ENCODE measurements at regions of chr22 and their contacts with region 1.

Region 1: GRCh38 chr22:37457093-37457893 is 28.9 kb downstream of the MFNG start:
- DNase-seq: peak; percentile 61 to 92
- H3K4me3 ChIP-seq: no peak overlapping the region
- H3K27ac ChIP-seq: no peak overlapping the region
- H3K4me1 ChIP-seq: peaks cover 27% of the 10 kb centered on the region
- H3K27me3 ChIP-seq: no peaks in the 10 kb centered on the region
- CTCF ChIP-seq: peak; percentile 100

Region 2: DNA sequence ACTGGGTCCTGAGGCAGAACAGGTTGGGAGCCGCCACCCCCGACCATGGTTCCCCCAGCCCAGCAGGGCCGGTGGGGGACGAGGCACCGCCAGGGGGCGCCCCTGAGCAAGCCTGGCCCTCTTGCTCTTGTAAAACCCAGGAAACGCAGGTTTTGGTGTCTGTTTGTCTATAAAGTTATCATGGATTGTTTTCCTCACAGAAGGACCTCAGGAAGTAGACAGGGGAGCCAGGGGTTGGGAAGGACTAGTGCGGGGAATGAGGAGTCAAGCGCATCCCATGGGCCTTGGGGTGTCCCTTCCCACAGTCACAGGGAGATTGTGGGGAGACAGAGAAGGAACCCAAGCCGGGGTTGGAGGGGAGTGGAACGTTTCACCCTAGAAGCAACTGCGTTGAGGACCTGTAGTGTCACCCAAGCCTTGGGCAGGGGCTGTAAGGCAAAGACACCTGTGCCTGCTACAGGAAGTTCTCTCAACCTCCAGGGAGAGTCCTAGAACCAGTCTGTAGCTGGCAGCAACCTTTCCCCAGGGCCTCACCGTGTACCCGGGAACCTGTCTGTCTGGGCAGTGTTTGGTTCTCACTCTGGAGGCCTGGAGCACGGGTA is 379.3 kb before region 1 on chr22:
- CTCF ChIA-PET with region 1: no interaction called
- POLR2A ChIA-PET with region 1: no interaction called
- intact Hi-C with region 1: loop called (anchors 5 kb)
- DNase-seq: peak in 1 of 2 experiments; percentile 74
- H3K4me3 ChIP-seq: no peak overlapping the region
- H3K27ac ChIP-seq: no peak overlapping the region
- H3K4me1 ChIP-seq: no peaks in the 10 kb centered on the region
- H3K27me3 ChIP-seq: peaks cover 43% of the 10 kb centered on the region
- CTCF ChIP-seq: peak; percentile 100

Region 3: DNA sequence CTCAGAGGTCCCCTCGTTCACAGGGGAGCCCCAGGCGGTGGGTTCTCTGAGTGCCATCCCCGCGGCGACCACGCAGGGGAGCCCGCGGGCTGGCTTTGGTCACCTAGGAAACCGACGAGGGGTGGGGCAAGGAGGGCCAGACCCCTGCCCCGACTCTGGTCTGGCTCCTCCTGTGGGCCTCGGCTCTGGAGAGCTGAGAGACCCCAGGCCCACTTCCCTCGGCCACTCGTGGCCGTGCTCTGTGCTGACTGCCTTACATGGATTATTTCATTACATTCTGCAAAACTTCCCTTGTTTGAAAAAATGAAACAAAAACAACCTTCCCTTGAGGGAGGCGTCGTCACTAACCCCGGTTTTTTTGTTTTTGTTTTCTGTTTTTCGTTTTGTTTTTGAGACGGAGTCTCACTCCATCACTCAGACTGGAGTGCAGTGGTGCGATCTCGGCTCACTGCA is 190.1 kb before region 1 on chr22:
- CTCF ChIA-PET with region 1: interaction called, 3 read pairs
- POLR2A ChIA-PET with region 1: no interaction called
- intact Hi-C with region 1: loop called (anchors 1 kb)
- DNase-seq: peak in 1 of 2 experiments; percentile 71
- H3K4me3 ChIP-seq: peak overlapping the region; percentile 56
- H3K27ac ChIP-seq: peak overlapping the region; percentile 42; the same call in 1 of the 2 replicates
- H3K4me1 ChIP-seq: peaks cover 13% of the 10 kb centered on the region
- H3K27me3 ChIP-seq: no peaks in the 10 kb centered on the region
- CTCF ChIP-seq: peak; percentile 96

Region 4: GRCh38 chr22:37353839-37354238 is 103.5 kb before region 1 on chr22:
- CTCF ChIA-PET with region 1: interaction called, 14 read pairs
- POLR2A ChIA-PET with region 1: no interaction called
- intact Hi-C with region 1: no loop called
- DNase-seq: peak; percentile 59 to 99
- H3K4me3 ChIP-seq: peak overlapping the region; percentile 1; the same call in 1 of the 2 replicates
- H3K27ac ChIP-seq: peak overlapping the region; percentile 90
- H3K4me1 ChIP-seq: peaks cover 57% of the 10 kb centered on the region
- H3K27me3 ChIP-seq: no peaks in the 10 kb centered on the region
- CTCF ChIP-seq: no peak

Region 5: DNA sequence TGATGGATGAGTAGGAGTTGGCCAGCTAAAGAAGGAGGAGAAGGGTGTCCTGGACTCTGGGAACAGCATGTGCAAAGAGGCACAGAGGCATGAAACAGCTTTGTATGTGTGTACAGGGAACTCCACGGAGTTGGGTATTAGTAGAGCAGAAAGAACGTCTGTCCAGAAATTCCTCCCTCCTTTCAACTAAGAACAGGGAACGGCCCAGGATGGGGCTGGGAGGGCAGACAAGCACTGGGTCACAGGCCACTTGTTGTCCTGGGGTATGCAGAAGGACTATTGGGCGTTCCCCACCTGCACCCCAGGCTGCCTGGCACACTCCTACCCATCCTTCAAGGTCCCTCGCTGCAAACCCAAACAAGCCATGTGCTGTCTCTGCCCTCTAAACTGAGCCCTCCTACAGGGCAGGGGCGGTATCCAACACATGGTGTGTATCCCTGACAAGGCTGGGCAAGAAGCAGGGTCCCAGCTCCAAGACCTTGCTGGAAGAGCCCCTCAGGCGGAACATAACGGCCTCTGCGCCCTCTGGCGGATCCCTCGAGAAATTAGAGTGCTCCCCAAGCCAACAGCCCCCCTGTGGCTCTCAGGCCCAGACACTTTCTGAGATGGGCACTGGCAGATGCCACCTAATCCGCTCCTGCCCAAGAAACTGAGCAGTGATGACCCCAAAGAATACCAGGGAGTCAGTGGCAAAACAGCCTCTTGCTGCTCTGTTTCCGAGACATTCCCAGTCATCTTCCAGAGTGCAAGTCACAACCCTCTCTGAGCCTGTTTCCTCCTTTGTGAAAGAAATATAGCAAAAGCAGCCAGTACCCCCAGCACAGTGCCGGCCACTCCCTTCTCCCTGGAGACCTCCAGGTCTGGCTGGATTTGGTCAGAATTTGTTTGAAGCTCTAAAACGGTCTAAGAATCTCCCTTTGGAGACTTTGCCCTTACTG is 28.4 kb before region 1 on chr22:
- CTCF ChIA-PET with region 1: interaction called, 3 read pairs
- POLR2A ChIA-PET with region 1: no interaction called
- intact Hi-C with region 1: loop called (anchors 1 kb)
- DNase-seq: no peak
- H3K4me3 ChIP-seq: no peak overlapping the region
- H3K27ac ChIP-seq: no peak overlapping the region
- H3K4me1 ChIP-seq: peaks cover 50% of the 10 kb centered on the region
- H3K27me3 ChIP-seq: no peaks in the 10 kb centered on the region
- CTCF ChIP-seq: peak; percentile 82

Region 6: DNA sequence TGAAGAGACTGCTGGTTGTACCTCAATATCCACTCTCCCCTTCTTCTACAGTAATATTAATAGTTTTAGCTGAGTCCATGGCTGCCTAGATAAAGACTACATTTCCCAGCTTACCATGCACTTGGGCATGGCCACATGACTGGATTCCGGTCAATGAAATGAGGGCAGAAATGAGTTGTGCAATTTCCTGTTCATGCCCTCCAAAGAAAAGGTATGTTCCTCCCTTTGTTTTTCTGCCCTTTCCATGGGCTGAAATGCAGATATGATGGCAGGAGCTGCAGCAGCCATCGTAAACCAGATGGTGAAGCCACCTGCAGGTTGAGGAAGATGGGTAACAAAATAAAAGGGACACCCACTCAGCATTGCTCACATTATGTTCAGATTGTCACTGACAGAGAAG is 14.8 kb before region 1 on chr22:
- CTCF ChIA-PET with region 1: no interaction called
- POLR2A ChIA-PET with region 1: no interaction called
- intact Hi-C with region 1: no loop called
- DNase-seq: peak in 1 of 2 experiments; percentile 76
- H3K4me3 ChIP-seq: no peak overlapping the region
- H3K27ac ChIP-seq: peak overlapping the region; percentile 77
- H3K4me1 ChIP-seq: peaks cover 24% of the 10 kb centered on the region
- H3K27me3 ChIP-seq: no peaks in the 10 kb centered on the region
- CTCF ChIP-seq: no peak

Region 7: DNA sequence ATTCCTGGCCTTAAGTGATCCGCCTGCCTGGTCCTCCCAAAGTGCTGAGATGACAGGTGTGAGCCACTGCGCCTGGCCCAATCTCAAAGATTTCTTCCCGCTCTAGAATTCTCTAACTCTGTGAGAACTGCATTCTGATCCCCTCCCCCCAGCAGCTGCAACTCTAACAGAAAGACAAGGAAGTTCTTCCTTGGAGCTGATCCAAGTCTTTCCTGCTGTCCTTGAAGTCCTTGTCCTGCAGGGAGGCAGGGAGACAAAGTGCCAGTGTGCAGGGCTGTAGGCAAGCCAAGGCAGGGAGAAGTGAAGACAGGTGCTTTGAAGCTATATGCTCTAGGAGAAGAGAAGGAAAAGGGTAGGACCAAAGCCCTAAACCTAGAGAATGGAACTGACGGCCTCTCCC is 141.9 kb after region 1 on chr22:
- CTCF ChIA-PET with region 1: no interaction called
- POLR2A ChIA-PET with region 1: no interaction called
- intact Hi-C with region 1: loop called (anchors 5 kb)
- DNase-seq: peak; percentile 19 to 40
- H3K4me3 ChIP-seq: no peak overlapping the region
- H3K27ac ChIP-seq: no peak overlapping the region
- H3K4me1 ChIP-seq: peaks cover 48% of the 10 kb centered on the region
- H3K27me3 ChIP-seq: no peaks in the 10 kb centered on the region
- CTCF ChIP-seq: no peak